ENCODE measurements at regions of chr14 and their contacts with region 1.

Region 1: GRCh38 chr14:75906676-75907280 is 75.0 kb downstream of the TGFB3 start:
- DNase-seq: no peak
- ATAC-seq: no peak
- H3K4me3 Mint-ChIP-seq: no peak overlapping the region
- H3K27ac Mint-ChIP-seq: no peak overlapping the region
- H3K4me1 Mint-ChIP-seq: no peaks in the 10 kb centered on the region
- H3K27me3 Mint-ChIP-seq: no peaks in the 10 kb centered on the region
- CTCF ChIP-seq: peak; percentile 29

Region 2: DNA sequence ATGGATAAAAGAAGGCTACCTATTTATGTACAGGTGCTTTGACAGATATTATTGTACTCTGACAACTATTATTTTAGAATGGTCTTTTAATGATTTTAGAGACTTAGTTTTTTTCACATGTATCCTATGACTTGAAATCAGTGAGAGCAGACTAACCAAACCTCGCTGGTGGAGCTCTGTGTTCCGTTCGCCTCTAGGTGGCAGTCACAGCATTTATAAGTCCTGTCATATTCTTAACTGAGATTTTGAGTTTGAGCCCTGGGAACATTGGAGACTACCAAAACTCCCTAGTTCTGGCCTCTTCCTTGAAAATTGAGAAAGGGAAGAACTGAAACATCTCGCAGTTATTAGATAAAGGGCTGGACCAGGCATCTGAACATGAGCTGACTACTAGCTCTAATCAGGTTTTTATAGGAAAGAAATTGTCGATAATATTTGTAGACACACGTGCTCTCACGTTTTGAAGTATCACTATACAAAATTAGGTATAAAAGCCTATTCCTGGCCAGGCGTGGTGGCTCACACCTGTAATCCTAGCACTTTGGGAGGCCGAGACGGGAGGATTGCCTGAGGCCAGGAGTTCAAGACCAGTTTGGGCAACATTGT is 197.5 kb before region 1 on chr14:
- CTCF ChIA-PET with region 1: interaction called, 37 read pairs
- POLR2A ChIA-PET with region 1: no interaction called
- intact Hi-C with region 1: loop called (anchors 2 kb)
- DNase-seq: no peak
- ATAC-seq: peak; percentile 70
- H3K4me3 Mint-ChIP-seq: no peak overlapping the region
- H3K27ac Mint-ChIP-seq: no peak overlapping the region
- H3K4me1 Mint-ChIP-seq: no peaks in the 10 kb centered on the region
- H3K27me3 Mint-ChIP-seq: no peaks in the 10 kb centered on the region
- CTCF ChIP-seq: peak; percentile 58

Region 3: DNA sequence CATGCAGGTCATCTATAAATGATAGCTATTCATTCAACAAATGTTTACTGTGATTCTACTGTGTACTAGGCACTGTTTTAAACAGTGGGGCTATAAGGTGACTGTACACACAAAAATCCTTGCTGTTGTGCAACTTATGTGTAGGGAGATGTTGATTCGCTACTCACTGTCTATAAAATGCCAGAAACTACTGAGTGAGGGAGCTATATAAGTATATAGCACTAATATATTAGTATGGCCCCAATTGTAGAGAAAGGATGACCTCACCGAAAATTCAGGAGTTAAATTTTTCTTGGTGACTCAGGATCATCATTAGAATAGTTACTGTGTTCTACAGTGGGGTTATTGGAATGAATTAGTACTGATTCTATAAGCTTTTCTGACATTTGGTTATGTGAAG is 42.4 kb before region 1 on chr14:
- CTCF ChIA-PET with region 1: no interaction called
- POLR2A ChIA-PET with region 1: no interaction called
- intact Hi-C with region 1: no loop called
- DNase-seq: no peak
- ATAC-seq: no peak
- H3K4me3 Mint-ChIP-seq: no peak overlapping the region
- H3K27ac Mint-ChIP-seq: no peak overlapping the region
- H3K4me1 Mint-ChIP-seq: no peaks in the 10 kb centered on the region
- H3K27me3 Mint-ChIP-seq: no peaks in the 10 kb centered on the region
- CTCF ChIP-seq: no peak

Region 4: DNA sequence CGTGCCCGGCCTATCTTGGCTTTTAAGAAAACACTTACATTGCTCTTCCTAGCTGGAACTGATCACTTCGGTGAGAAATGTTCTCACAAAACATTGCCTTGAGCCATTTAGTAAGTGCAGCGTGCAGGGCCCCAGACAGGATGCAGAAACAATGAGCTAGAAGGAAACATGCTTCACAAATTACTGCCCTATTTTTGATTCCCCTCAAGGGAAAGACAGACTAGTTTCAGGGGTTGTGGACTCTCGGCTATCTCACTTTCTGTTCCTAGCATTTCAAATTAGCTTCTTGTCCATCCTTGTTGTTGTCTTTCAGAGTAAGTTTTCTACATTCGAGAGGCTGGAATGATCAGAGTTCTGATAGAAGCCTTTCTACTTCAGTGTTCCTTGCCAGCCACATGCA is 53.5 kb after region 1 on chr14:
- CTCF ChIA-PET with region 1: interaction called, 17 read pairs
- POLR2A ChIA-PET with region 1: no interaction called
- intact Hi-C with region 1: no loop called
- DNase-seq: no peak
- ATAC-seq: peak; percentile 93
- H3K4me3 Mint-ChIP-seq: peak overlapping the region; percentile 70
- H3K27ac Mint-ChIP-seq: peak overlapping the region; percentile 91
- H3K4me1 Mint-ChIP-seq: peaks cover 51% of the 10 kb centered on the region
- H3K27me3 Mint-ChIP-seq: no peaks in the 10 kb centered on the region
- CTCF ChIP-seq: no peak

Region 5: GRCh38 chr14:75972801-75973421 is 66.1 kb after region 1 on chr14:
- CTCF ChIA-PET with region 1: interaction called, 363 read pairs
- POLR2A ChIA-PET with region 1: no interaction called
- intact Hi-C with region 1: no loop called
- DNase-seq: no peak
- ATAC-seq: no peak
- H3K4me3 Mint-ChIP-seq: no peak overlapping the region
- H3K27ac Mint-ChIP-seq: no peak overlapping the region
- H3K4me1 Mint-ChIP-seq: peaks cover 17% of the 10 kb centered on the region
- H3K27me3 Mint-ChIP-seq: no peaks in the 10 kb centered on the region
- CTCF ChIP-seq: no peak

Region 6: GRCh38 chr14:76109087-76109880 is 202.5 kb after region 1 on chr14:
- CTCF ChIA-PET with region 1: no interaction called
- POLR2A ChIA-PET with region 1: no interaction called
- intact Hi-C with region 1: no loop called
- DNase-seq: no peak
- ATAC-seq: no peak
- H3K4me3 Mint-ChIP-seq: no peak overlapping the region
- H3K27ac Mint-ChIP-seq: no peak overlapping the region
- H3K4me1 Mint-ChIP-seq: no peaks in the 10 kb centered on the region
- H3K27me3 Mint-ChIP-seq: peaks cover 18% of the 10 kb centered on the region
- CTCF ChIP-seq: no peak

Region 7: GRCh38 chr14:76352639-76353281 is 446.0 kb after region 1 on chr14:
- CTCF ChIA-PET with region 1: no interaction called
- POLR2A ChIA-PET with region 1: no interaction called
- intact Hi-C with region 1: loop called (anchors 5 kb)
- DNase-seq: peak; percentile 53
- ATAC-seq: no peak
- H3K4me3 Mint-ChIP-seq: peak overlapping the region; percentile 21
- H3K27ac Mint-ChIP-seq: no peak overlapping the region
- H3K4me1 Mint-ChIP-seq: peaks cover 2% of the 10 kb centered on the region
- H3K27me3 Mint-ChIP-seq: peaks cover 39% of the 10 kb centered on the region
- CTCF ChIP-seq: no peak

Measured in activated B cell treated with CpG ODN at 0.5 μM for 24 hours (primary cell).